MCF 10A (cell line): ENCODE measurements at regions of chr1 and their contacts with region 1.

Region 1: GRCh38 chr1:222288040-222288439 is 259.9 kb downstream of the HHIPL2 start:
- DNase-seq: peak; percentile 97
- H3K4me3 Mint-ChIP-seq: peak overlapping the region; percentile 19
- H3K27ac Mint-ChIP-seq: peak overlapping the region; percentile 68
- H3K4me1 Mint-ChIP-seq: peaks cover 35% of the 10 kb centered on the region
- H3K27me3 Mint-ChIP-seq: no peaks in the 10 kb centered on the region
- CTCF ChIP-seq: peak; percentile 15

Region 2: DNA sequence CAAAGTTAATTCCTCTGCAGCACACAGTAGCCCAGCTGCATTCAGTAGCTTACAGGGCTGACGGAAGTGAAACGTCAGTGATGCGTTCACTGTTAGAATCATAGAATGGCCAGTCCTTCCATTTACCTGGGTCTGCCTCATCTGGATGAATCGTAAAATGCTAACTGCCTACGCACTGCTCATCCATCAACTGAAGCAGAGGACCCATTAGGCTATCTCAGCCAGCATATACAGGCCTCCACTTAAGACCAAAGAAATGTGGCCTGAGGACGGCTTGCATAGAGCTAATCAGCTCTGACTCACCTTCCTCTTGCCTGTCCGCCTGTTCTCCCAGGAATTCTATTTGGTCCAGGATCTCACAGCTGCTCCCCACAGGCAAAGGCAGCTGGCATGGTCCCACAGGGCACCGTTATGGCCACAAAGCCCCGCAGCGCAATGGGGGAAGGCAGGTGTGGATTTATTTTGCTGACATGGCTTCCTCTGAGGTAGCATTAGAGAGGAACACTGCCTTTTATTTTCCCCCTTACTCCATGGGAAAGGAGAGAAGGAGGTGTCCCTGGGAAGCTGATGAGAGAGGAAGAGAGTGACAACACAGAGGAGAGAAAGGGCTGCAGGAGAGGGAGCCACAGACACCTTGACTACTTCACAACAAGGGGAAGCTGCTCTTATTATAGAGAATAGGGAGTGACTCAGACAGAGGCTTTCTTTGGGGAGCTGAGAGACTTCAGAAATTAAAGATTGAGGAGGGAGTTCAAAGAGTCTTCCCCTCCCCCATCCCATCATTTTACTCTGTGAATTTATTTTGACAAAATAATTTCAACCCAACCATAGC is 82.3 kb after region 1 on chr1:
- CTCF ChIA-PET with region 1: no interaction called
- POLR2A ChIA-PET with region 1: no interaction called
- intact Hi-C with region 1: loop called (anchors 2 kb)
- DNase-seq: peak; percentile 78
- H3K4me3 Mint-ChIP-seq: no peak overlapping the region
- H3K27ac Mint-ChIP-seq: peak overlapping the region; percentile 94
- H3K4me1 Mint-ChIP-seq: peaks cover 20% of the 10 kb centered on the region
- H3K27me3 Mint-ChIP-seq: no peaks in the 10 kb centered on the region
- CTCF ChIP-seq: no peak